Ovary (tissue), 10 donors: ENCODE measurements at regions of chr6 and their contacts with region 1.

Region 1: GRCh38 chr6:145814501-145815308 is at the start of gene FBXO30:
- DNase-seq: peak; percentile 83 to 94 (median 89)
- H3K4me3 ChIP-seq: peak within 1 kb of the TSS; percentile 75
- H3K27ac ChIP-seq: peak within 1 kb of the TSS; percentile 74 to 84
- H3K4me1 ChIP-seq: peaks cover 2% of the 10 kb centered on the region
- H3K27me3 ChIP-seq: no peaks in the 10 kb centered on the region
- CTCF ChIP-seq: peak in 2 of 3 donors; percentile 46 to 58
- EP300 ChIP-seq: no peak
- POLR2A ChIP-seq: peak; percentile 70
- total RNA-seq, gene FBXO30: 5.6 to 13.5 (median 9.7) TPM

Region 2: DNA sequence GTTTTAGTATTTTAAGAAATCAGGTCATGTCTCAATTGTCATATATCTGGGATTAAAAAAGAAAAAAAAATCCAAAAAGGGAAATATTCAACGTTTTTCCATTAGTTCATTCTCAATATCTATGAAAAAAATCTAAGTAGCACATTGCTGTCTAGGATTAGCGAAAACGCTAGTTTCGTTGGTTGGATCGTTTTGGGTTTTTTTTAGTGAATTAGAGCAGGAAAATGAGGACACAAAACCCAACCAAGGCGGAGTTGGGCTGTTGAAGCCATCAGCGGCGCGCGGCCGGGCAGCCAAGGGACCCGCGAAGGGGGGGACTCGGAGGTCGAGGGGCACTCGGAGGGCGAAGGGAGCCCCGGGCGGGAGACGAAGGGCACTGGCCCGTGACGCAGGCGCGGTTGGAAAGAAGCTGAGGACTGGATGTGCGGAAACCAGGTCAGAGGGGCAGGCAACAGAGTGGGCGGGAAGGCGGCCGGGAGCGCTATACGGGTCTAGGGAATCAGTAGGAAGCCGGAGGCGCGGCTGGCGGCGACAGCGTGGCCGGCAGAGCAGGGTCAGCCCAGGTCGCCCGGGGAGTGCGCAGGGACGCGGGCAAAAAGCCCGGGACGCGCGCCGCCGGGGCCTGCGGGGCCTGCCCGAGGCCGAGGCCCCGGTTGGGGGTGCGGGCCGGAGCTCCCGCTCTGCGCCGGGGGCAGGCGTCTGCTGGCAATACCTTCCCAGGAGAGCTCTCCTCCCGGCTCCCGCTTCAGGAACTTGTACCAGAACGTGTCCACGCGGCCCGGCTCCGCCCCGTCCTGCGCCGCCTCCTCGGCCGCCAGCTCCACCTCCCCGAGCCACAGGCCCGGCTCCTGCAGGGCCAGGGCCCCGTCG is 80.0 kb before region 1 on chr6:
- intact Hi-C with region 1: loop called (anchors 2 to 10 kb)
- DNase-seq: peak; percentile 85 to 92 (median 89)
- H3K4me3 ChIP-seq: peak overlapping the region; percentile 57
- H3K27ac ChIP-seq: peak overlapping the region; percentile 96 to 99
- H3K4me1 ChIP-seq: peaks cover 2% of the 10 kb centered on the region
- H3K27me3 ChIP-seq: no peaks in the 10 kb centered on the region
- CTCF ChIP-seq: no peak
- EP300 ChIP-seq: peak; percentile 5
- POLR2A ChIP-seq: peak; percentile 57

Region 3: DNA sequence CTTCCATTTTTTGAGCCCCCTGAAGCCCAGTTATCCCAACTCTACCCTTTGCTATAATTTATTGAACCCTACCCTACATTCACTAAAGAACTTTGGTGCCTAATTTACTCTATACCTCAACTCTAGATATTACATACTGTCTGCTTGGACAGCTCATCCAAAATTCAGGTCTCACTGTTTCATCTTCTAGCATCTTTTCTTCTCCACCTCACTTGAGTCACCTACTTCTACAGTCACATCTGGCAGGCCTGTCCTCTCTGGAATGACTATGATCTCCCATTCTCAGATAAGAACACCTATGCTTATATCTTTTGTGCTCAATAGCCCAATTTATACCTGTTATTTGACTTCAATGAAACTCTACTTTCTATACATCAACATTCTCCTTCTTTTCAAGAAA is 91.4 kb after region 1 on chr6:
- intact Hi-C with region 1: no loop called
- DNase-seq: no peak
- H3K4me3 ChIP-seq: no peak overlapping the region
- H3K27ac ChIP-seq: no peak overlapping the region
- H3K4me1 ChIP-seq: peaks cover 2% of the 10 kb centered on the region
- H3K27me3 ChIP-seq: no peaks in the 10 kb centered on the region
- CTCF ChIP-seq: no peak
- EP300 ChIP-seq: no peak
- POLR2A ChIP-seq: no peak

Region 4: DNA sequence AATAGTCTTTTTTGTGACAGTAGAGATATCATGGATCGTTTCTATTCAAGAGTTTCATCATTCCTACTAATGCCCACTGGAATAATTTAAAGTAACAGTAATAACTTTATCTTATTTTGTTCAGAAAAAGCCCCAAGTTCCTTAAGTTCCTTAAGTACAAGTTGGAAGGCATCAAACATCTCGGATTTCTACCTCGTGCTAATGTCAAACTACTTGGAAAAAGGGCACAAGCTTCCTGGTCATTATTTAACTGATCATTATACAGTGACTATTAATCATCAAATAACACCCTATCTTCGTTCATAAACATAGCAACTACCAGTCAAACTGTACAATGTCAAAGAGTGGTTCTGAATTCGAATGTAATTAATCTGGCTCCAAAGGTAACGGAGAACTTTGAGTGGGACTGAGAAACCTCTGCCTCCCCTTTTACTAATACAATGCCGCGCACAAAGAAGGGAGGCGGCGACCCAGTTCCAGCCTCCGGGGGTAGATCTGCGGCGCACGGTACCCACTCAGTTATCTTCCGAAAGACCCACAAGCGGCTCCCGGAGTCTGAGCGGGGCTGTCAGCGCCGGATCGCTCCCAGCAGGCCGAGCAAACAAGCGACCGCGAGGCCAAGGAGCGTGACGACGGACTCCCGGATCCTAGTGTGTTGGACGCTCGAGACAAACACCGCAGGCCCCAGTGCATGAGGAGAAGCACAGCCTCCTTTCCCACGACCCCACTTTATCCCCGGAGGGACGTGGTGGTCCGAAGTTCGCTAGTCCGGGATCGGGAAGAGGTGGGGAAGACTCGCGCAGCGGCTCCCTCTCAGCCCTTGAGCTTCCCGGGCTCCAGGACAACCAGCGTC is 148.7 kb after region 1 on chr6:
- intact Hi-C with region 1: loop called in 2 of 4 experiments (anchors 5 to 10 kb)
- DNase-seq: no peak
- H3K4me3 ChIP-seq: peak overlapping the region; percentile 88
- H3K27ac ChIP-seq: peak overlapping the region; percentile 81 to 85
- H3K4me1 ChIP-seq: peaks cover 11% of the 10 kb centered on the region
- H3K27me3 ChIP-seq: no peaks in the 10 kb centered on the region
- CTCF ChIP-seq: no peak
- EP300 ChIP-seq: no peak
- POLR2A ChIP-seq: no peak

Region 5: DNA sequence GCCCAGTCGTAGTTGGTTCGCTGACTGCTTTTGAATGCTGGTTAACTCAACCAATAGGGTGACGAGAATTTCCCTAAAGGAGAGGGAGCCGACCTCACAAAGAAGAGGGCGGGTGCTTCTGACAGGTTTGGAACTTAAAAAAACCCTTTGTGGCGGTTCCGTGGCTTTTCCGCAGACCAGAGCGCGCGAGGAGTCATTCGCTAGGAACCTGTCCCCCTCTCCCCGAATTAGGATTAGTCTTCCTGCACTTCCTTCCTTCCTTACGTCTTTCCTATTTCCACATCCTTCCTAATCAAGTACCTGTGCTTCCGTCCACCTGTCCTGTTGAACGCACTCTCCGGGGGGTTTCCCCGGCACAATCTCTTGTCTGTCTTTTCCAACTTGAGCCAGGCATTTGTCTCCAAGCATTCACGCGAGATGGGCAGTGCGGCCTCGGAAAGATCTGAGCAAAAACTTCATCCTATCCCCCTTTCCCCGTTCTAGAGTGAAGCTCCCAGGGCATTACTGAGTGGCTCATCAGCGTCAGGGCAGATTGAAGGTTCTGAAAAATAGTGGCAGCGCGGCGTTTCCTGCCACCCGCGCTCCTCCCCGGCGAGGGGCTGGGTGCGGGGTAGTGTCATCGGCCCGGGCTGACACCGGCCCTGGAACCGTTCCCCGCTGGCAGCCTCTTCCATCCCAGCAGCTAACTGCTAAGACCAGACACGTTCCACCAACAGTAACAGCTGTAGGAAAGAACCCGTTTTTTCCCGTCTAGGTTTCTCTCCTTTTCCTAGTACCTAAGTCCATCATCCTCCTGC is 1388.0 kb after region 1 on chr6:
- intact Hi-C with region 1: loop called in 1 of 4 experiments (anchors 10 kb)
- DNase-seq: peak; percentile 68 to 82 (median 72)
- H3K4me3 ChIP-seq: peak overlapping the region; percentile 64
- H3K27ac ChIP-seq: peak overlapping the region; percentile 98
- H3K4me1 ChIP-seq: peaks cover 2% of the 10 kb centered on the region
- H3K27me3 ChIP-seq: no peaks in the 10 kb centered on the region
- CTCF ChIP-seq: no peak
- EP300 ChIP-seq: no peak
- POLR2A ChIP-seq: peak; percentile 54